ENCODE measurements at regions of chr12 and their contacts with region 1.

Region 1: GRCh38 chr12:27424631-27425230 is 21.8 kb upstream of the SMCO2 start:
- DNase-seq: no peak
- H3K4me3 ChIP-seq: no peak overlapping the region
- H3K27ac ChIP-seq: peak overlapping the region in 1 of 2 donors; percentile 40
- H3K4me1 ChIP-seq: no peaks in the 10 kb centered on the region
- H3K27me3 ChIP-seq: no peaks in the 10 kb centered on the region
- CTCF ChIP-seq: peak; percentile 30 to 58 (median 57)

Region 2: DNA sequence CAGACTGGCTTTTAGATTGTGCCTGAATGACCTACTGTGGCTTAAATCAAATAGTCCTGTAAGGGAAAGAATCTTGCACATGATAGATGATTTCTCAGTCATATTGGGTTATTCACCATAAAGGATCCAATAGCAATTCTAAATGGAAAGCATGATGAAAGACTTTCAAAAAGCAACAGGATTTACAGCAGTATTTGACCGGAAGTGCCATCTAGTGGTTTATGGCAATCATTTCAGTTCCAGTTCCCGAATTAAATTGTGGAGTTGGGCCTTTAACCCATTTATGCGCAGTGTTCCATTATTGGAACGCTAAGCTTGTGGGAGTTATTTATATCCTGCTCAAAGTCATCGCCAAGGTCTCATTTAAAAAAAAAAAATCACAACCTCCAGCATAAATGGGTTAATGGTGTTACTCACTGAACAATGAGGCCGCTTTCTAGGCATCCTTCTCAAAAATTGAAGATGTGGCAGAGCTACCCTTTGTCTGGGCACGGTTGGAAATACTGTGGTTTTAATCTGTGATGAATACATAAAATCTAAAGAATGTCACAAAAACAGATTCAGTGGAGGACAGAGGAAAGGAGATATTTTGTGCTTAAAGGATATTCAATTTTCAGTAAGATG is 210.7 kb after region 1 on chr12:
- intact Hi-C with region 1: loop called (anchors 5 kb)
- DNase-seq: no peak
- H3K4me3 ChIP-seq: no peak overlapping the region
- H3K27ac ChIP-seq: peak overlapping the region in 1 of 2 donors; percentile 27
- H3K4me1 ChIP-seq: peaks cover 4 to 23% of the 10 kb centered on the region in 2 donors
- H3K27me3 ChIP-seq: no peaks in the 10 kb centered on the region
- CTCF ChIP-seq: peak; percentile 58 to 71 (median 70)

Region 3: GRCh38 chr12:27652174-27652763 is 227.5 kb after region 1 on chr12:
- intact Hi-C with region 1: loop called (anchors 2 kb)
- DNase-seq: no peak
- H3K4me3 ChIP-seq: no peak overlapping the region
- H3K27ac ChIP-seq: peak overlapping the region in 1 of 2 donors; percentile 2
- H3K4me1 ChIP-seq: peaks cover 0 to 14% of the 10 kb centered on the region in 2 donors
- H3K27me3 ChIP-seq: no peaks in the 10 kb centered on the region
- CTCF ChIP-seq: peak; percentile 74 to 85 (median 79)

Region 4: DNA sequence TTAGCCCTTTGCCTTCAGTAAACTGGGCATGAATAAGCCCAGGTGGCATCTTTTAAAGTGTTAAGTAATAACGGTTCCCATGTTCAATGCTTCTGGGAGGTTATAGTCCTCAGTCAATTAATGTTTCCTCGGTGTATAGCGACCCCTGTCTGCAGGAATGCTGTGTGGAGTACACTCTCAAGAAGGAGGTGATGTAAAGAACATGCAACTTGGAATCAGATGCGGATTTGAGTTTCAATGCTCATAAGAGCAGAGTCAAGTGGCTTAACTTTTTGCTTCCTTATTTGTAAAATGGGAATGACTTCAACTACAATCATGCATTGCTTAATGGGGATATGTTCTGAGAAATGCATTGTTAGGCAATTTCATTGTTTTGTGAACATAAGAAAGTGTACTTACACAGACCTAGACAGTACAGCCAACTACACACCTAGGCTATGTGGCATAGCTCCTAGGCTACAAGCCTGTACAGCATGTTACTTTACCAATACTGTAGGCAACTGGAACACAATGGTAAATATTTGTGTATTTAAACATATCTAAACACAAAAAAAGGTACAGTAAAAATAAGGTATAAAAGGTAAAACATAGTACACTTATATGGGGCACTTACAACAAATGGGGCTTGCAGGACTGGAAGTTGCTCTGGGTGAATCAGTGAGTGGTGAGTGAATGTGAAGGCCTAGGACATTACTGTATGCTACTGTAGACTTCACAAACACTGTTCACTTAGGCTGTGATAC is 279.1 kb after region 1 on chr12:
- intact Hi-C with region 1: loop called (anchors 5 kb)
- DNase-seq: peak in 1 of 2 donors; percentile 87
- H3K4me3 ChIP-seq: no peak overlapping the region
- H3K27ac ChIP-seq: no peak overlapping the region
- H3K4me1 ChIP-seq: peaks cover 0 to 4% of the 10 kb centered on the region in 2 donors
- H3K27me3 ChIP-seq: no peaks in the 10 kb centered on the region
- CTCF ChIP-seq: peak; percentile 65 to 84 (median 80)

Measured in ascending aorta (tissue), 2 donors.